A673 (cell line): ENCODE measurements at regions of chr12 and their contacts with region 1.

Region 1: DNA sequence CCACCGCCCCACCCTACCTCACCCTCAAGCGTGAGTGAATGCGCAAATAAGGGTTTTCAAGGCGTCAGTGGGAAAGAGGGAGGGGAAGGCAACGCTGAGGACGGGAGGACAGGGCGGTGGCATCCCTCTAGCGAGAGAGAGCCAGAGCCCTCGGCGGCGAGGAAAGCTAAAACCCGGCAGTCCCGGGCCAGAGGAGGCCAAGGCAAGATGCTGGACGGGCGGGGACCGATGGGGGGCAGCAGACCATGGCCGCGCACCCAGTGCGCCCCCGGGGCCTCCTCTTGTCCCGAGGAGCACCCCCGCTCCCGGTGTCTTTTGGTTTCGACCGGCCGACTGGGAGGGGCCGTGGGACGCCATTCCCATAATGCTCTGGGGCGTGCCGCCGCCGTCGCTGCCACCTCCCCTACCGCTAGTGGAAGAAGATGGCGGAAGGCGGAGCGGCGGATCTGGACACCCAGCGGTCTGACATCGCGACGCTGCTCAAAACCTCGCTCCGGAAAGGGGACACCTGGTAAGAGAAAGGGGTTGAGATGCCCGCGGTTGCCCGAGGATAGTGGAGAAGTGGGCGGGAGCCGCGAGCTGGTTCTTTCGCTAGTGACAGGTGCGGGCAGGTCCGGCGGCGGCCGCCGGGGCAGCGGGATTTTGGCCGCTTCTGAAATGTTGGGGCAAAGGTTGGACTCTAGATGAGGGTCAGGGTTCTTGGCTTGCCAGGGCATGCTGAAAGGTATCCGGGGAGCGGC is at the start of gene USP15:
- DNase-seq: peak; percentile 98
- H3K4me3 ChIP-seq: peak within 1 kb of the TSS; percentile 89
- H3K27ac ChIP-seq: peak within 1 kb of the TSS; percentile 93
- H3K4me1 ChIP-seq: peaks cover 30% of the 10 kb centered on the region
- H3K27me3 ChIP-seq: no peaks in the 10 kb centered on the region
- CTCF ChIP-seq: peak; percentile 79
- total RNA-seq, gene USP15: 61.7 and 65.7 TPM in 2 replicates

Region 2: GRCh38 chr12:62472472-62472871 is 212.3 kb after region 1 on chr12:
- CTCF ChIA-PET with region 1: no interaction called
- POLR2A ChIA-PET with region 1: no interaction called
- intact Hi-C with region 1: loop called (anchors 5 kb)
- DNase-seq: no peak
- H3K4me3 ChIP-seq: no peak overlapping the region
- H3K27ac ChIP-seq: no peak overlapping the region
- H3K4me1 ChIP-seq: peaks cover 9% of the 10 kb centered on the region
- H3K27me3 ChIP-seq: no peaks in the 10 kb centered on the region
- CTCF ChIP-seq: no peak

Region 3: DNA sequence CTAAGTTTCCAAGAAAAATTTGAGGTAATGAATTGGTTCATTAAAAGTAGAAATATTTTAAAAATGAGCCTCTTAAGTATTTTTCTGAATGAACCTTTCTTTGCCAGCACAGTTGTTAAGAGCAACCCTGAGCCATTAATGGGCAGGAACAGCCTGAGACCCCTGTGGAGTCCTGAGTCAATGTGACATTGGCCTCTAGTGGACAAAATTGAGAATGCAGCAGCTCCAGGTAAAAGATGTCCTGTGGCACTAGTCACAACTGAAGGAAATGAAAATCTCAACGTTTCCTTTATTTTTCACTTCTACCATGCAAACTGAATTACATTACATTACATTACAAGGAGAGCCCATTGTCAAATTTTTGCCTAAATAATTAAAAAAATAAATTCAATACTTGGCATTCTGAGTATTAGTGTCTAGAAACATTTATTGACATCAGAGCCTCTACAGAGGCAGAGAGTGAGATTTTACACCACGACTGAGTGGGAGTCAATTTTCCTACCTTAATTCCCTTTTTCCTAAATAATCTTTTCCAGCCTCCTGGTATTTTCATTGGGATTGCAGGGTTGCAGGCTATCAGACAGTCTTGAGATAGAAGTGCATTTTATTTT is 539.1 kb after region 1 on chr12:
- CTCF ChIA-PET with region 1: no interaction called
- POLR2A ChIA-PET with region 1: no interaction called
- intact Hi-C with region 1: loop called (anchors 10 kb)
- DNase-seq: peak; percentile 88
- H3K4me3 ChIP-seq: no peak overlapping the region
- H3K27ac ChIP-seq: no peak overlapping the region
- H3K4me1 ChIP-seq: no peaks in the 10 kb centered on the region
- H3K27me3 ChIP-seq: no peaks in the 10 kb centered on the region
- CTCF ChIP-seq: peak; percentile 87